Calu3 (cell line): ENCODE measurements at regions of chr15 and their contacts with region 1.

Region 1: GRCh38 chr15:93035953-93036800 is 52.8 kb downstream of the RGMA start:
- DNase-seq: peak; percentile 63
- H3K4me3 Mint-ChIP-seq: no peak overlapping the region
- H3K27ac Mint-ChIP-seq: no peak overlapping the region
- H3K4me1 Mint-ChIP-seq: peaks cover 5% of the 10 kb centered on the region
- H3K27me3 Mint-ChIP-seq: peaks cover 18% of the 10 kb centered on the region
- CTCF ChIP-seq: peak; percentile 81

Region 2: GRCh38 chr15:92936693-92937092 is 99.5 kb before region 1 on chr15:
- CTCF ChIA-PET with region 1: interaction called, 10 read pairs
- intact Hi-C with region 1: no loop called
- DNase-seq: no peak
- H3K4me3 Mint-ChIP-seq: no peak overlapping the region
- H3K27ac Mint-ChIP-seq: no peak overlapping the region
- H3K4me1 Mint-ChIP-seq: peaks cover 4% of the 10 kb centered on the region
- H3K27me3 Mint-ChIP-seq: no peaks in the 10 kb centered on the region
- CTCF ChIP-seq: no peak

Region 3: GRCh38 chr15:93012786-93013185 is 23.4 kb before region 1 on chr15:
- CTCF ChIA-PET with region 1: no interaction called
- intact Hi-C with region 1: no loop called
- DNase-seq: no peak
- H3K4me3 Mint-ChIP-seq: no peak overlapping the region
- H3K27ac Mint-ChIP-seq: no peak overlapping the region
- H3K4me1 Mint-ChIP-seq: no peaks in the 10 kb centered on the region
- H3K27me3 Mint-ChIP-seq: no peaks in the 10 kb centered on the region
- CTCF ChIP-seq: no peak

Region 4: GRCh38 chr15:93974804-93975481 is 938.8 kb after region 1 on chr15:
- CTCF ChIA-PET with region 1: no interaction called
- intact Hi-C with region 1: loop called (anchors 5 kb)
- DNase-seq: no peak
- H3K4me3 Mint-ChIP-seq: no peak overlapping the region
- H3K27ac Mint-ChIP-seq: no peak overlapping the region
- H3K4me1 Mint-ChIP-seq: no peaks in the 10 kb centered on the region
- H3K27me3 Mint-ChIP-seq: peaks cover 12% of the 10 kb centered on the region
- CTCF ChIP-seq: no peak